Transverse colon (tissue), 4 donors: ENCODE measurements at regions of chr14 and their contacts with region 1.

Region 1: DNA sequence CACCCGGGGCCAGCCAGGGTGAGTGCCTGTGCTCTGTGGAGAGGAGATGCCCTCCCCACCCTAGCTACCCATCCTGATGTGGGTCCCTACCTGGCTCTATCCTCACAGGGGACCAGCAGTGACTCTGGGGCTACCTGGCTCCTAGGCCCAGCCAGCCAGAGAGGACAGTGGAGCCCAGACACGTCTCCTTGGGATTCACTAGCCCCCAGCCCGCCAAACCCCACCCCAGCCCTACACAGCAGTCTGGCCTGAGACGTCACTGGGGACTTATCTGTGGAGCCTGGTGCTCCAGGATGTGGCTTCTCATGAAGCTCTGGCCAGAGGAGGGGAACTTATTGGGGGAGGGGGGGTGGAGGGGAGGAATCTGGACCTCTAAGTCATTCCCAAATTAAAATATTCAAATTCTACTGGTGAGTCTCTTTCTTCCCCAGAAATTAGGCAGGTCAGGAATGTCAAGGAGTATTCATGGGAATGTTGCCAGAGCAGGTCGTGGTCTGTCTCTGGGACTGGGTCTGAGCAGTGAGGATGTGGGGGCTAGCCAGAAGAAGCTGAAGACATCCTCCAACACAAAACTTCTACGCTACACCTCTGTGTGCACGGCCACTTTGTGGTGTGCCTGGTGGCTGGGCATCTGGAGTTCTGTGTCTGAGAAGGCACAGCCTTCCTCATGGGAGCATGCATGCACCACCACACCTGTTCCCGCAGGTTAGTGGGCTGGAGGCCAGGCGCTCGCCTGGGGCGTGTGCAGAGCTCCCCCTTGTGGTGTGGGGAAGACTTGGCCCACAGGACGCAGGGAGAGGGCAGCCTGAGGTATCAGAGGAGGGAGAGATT is 2.7 kb downstream of the CMTM5 start:
- DNase-seq: peak; percentile 75
- H3K4me3 ChIP-seq: no peak overlapping the region
- H3K27ac ChIP-seq: no peak overlapping the region
- H3K4me1 ChIP-seq: peaks cover 0 to 6% (median 0%) of the 10 kb centered on the region in 4 donors
- H3K27me3 ChIP-seq: no peaks in the 10 kb centered on the region
- CTCF ChIP-seq: peak; percentile 87 to 93 (median 88)
- EP300 ChIP-seq: no peak
- POLR2A ChIP-seq: no peak

Region 2: GRCh38 chr14:23252420-23253333 is 126.9 kb before region 1 on chr14:
- in situ Hi-C with region 1: loop called in 1 of 4 experiments (anchors 25 kb)
- intact Hi-C with region 1: no loop called
- DNase-seq: no peak
- H3K4me3 ChIP-seq: no peak overlapping the region
- H3K27ac ChIP-seq: no peak overlapping the region
- H3K4me1 ChIP-seq: no peaks in the 10 kb centered on the region
- H3K27me3 ChIP-seq: peaks cover 3% of the 10 kb centered on the region
- CTCF ChIP-seq: no peak
- EP300 ChIP-seq: no peak
- POLR2A ChIP-seq: no peak

Region 3: GRCh38 chr14:23269193-23269592 is 110.4 kb before region 1 on chr14:
- in situ Hi-C with region 1: loop called in 1 of 4 experiments (anchors 25 kb)
- intact Hi-C with region 1: loop called (anchors 2 kb)
- DNase-seq: no peak
- H3K4me3 ChIP-seq: no peak overlapping the region
- H3K27ac ChIP-seq: no peak overlapping the region
- H3K4me1 ChIP-seq: no peaks in the 10 kb centered on the region
- H3K27me3 ChIP-seq: no peaks in the 10 kb centered on the region
- CTCF ChIP-seq: no peak
- EP300 ChIP-seq: no peak
- POLR2A ChIP-seq: no peak

Region 4: DNA sequence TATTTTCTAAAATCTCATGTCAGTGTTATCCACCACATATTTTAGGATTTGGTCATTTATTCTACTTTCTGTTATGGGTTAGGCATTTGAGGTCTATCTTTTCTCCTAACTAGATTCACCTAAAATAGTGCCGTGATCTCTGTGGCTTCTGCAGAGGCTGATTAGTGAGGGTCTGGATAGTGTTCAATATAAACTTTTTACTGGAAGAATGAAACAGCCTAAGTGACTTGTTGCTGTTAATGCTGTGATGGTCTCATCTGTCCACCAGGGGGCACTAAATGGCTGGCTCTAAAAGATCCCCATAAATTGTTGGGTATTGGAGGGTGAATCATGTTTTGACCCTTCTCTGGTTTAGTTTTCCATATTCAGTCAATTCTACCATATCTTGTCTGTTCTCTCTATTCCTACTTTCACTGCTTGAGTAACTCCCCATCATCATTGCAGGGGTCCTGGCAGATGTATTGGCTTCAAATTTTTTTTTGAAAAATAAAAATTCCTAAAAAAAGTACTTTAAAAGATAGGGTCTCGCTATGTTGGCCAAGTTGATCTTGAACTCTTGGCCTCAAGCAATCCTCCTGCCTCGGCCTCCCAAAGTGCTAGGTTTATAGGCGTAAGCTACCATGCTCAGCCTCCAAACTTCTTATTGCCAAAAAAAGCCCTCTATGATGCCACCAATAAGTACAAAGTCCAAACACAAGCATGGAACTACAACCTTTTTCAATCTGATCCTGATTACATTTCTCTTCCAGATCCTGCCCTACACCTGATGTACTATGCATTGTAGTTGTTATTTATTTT is 51.4 kb before region 1 on chr14:
- in situ Hi-C with region 1: no loop called
- intact Hi-C with region 1: loop called (anchors 2 kb)
- DNase-seq: peak; percentile 76
- H3K4me3 ChIP-seq: no peak overlapping the region
- H3K27ac ChIP-seq: no peak overlapping the region
- H3K4me1 ChIP-seq: peaks cover under 1 to 8% (median 2%) of the 10 kb centered on the region in 4 donors
- H3K27me3 ChIP-seq: no peaks in the 10 kb centered on the region
- CTCF ChIP-seq: peak; percentile 85 to 90 (median 86)
- EP300 ChIP-seq: no peak
- POLR2A ChIP-seq: no peak